ENCODE measurements at regions of chr7 and their contacts with region 1.

Region 1: DNA sequence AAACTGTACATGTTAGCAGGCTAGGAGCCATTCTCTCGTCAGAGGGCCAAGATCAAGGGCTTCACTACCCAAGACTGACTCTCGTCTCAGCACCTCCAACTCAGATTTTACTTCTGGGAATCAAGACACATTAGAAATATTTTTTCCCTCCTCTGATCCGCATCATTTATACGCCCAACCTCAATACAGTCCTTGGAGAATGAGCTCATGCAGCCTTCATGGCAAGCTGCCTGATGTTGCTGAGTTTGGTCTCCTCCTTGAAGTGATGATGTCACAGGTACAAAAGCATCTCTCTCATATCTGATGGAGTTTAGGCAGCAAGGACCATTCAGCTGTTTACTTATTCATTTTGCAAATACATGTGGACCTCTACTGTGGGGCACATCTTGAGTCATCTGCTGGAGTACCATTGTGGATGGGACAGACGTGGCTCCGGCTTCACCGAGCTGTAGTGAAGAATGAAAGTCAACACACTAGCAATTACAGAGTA is 114.0 kb downstream of the BMPER start:
- DNase-seq: no peak
- H3K4me3 ChIP-seq: no peak overlapping the region
- CTCF ChIP-seq: no peak

Region 2: DNA sequence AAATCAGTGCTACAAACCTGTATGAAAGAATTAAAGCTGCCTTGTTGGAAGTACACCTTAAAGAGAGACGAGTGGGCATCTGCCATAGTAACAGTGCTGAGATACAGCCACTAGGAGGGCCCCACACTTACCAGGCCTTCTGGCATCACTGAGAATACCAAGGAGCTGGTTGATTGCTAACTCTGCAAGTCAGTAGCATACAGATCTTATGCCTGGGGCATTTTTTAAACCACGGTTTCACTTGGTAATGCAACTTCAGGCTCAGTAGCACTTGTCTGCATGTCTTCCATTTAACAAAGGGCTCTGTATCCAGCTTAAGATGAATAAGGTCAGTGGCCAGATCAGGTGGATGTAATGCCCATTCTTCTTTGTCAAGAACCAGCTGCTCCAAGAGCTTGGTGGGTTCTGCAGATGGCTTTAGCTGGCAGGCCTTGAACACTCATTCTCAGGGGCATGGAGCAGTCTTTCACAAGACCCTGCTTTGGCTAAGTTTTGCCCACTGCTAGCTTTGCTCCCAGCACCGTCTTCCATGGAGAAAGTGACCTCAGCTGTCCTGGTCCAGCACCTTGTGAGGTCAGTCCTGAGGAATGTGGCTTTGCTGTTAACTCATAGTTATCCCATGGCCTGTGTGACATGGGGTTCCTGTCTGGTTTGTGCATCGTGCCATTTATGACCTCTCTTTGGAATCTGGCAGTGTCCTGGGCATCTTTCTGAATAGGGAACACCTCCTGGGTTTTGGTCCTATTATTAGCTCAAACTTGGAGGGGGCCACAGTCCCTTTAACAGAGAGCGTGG is 45.9 kb before region 1 on chr7:
- in situ Hi-C with region 1: loop called (anchors 5 kb)
- DNase-seq: no peak
- H3K4me3 ChIP-seq: no peak overlapping the region
- CTCF ChIP-seq: no peak

Measured in astrocyte of the cerebellum (primary cell).